WTC11 (cell line): ENCODE measurements at regions of chr17 and their contacts with region 1.

Region 1: DNA sequence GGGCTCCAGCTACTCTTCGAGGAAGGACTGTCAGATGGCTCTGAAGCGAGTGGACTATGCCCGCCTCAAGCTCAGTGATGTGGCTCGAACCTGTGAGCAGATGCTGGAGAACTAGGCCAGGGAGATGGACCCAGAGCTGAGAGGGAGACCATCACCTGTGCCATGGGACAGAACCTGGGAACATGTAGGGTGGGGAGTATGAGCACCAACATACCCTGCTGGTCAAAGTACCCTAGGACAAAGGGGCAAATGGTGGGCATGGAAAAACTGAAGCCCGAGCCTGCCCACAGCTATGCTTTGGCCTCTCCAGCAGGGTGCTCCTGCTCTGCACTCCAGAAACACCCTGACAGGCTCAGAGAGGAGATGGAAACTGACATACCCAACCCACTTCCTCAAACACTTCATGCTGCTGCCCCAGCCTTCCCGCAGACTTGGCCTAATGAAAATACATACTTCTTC is 1.9 kb downstream of the MED11 start:
- DNase-seq: no peak
- ATAC-seq: no peak
- H3K4me3 Mint-ChIP-seq: no peak overlapping the region
- H3K27ac Mint-ChIP-seq: no peak overlapping the region
- H3K4me1 Mint-ChIP-seq: peaks cover 4% of the 10 kb centered on the region
- H3K27me3 Mint-ChIP-seq: peaks cover 31% of the 10 kb centered on the region
- CTCF ChIP-seq: no peak

Region 2: GRCh38 chr17:4648741-4649140 is 84.4 kb before region 1 on chr17:
- CTCF ChIA-PET with region 1: no interaction called
- POLR2A ChIA-PET with region 1: no interaction called
- DNase-seq: no peak
- ATAC-seq: no peak
- H3K4me3 Mint-ChIP-seq: no peak overlapping the region
- H3K27ac Mint-ChIP-seq: no peak overlapping the region
- H3K4me1 Mint-ChIP-seq: peaks cover 8% of the 10 kb centered on the region
- H3K27me3 Mint-ChIP-seq: peaks cover 20% of the 10 kb centered on the region
- CTCF ChIP-seq: no peak

Region 3: GRCh38 chr17:4709794-4710692 is 23.1 kb before region 1 on chr17 and contains the start of gene ARRB2:
- CTCF ChIA-PET with region 1: interaction called, 17 read pairs
- POLR2A ChIA-PET with region 1: interaction called, 4 read pairs
- DNase-seq: peak; percentile 95
- ATAC-seq: peak; percentile 85
- H3K4me3 Mint-ChIP-seq: peak within 1 kb of the TSS; percentile 82
- H3K27ac Mint-ChIP-seq: peak within 1 kb of the TSS; percentile 98
- H3K4me1 Mint-ChIP-seq: peaks cover 30% of the 10 kb centered on the region
- H3K27me3 Mint-ChIP-seq: peaks cover 7% of the 10 kb centered on the region
- CTCF ChIP-seq: no peak
- total RNA-seq, gene ARRB2: 79.7 to 87.8 TPM (median 81.0 TPM) in 3 replicates

Region 4: DNA sequence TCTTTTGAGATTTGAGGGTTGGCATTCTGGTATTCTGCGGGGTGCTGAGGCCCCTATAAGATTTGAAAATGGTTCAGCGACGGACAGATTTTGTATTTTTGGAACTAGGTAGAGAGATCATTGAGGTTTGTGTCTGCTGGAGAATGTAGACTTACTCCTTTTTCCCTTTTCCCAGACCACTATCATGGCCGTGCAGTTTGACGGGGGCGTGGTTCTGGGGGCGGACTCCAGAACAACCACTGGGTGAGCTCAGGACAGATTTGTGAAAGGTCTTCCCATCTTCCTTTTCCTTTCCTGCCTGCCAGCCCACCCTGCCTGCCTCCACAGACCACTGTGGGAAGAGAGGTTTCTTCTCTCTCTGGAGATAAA is 63.4 kb after region 1 on chr17:
- CTCF ChIA-PET with region 1: interaction called, 10 read pairs
- POLR2A ChIA-PET with region 1: interaction called, 4 read pairs
- DNase-seq: peak; percentile 43
- ATAC-seq: peak; percentile 71
- H3K4me3 Mint-ChIP-seq: peak overlapping the region; percentile 99
- H3K27ac Mint-ChIP-seq: peak overlapping the region; percentile 99
- H3K4me1 Mint-ChIP-seq: no peaks in the 10 kb centered on the region
- H3K27me3 Mint-ChIP-seq: peaks cover 16% of the 10 kb centered on the region
- CTCF ChIP-seq: no peak

Region 5: DNA sequence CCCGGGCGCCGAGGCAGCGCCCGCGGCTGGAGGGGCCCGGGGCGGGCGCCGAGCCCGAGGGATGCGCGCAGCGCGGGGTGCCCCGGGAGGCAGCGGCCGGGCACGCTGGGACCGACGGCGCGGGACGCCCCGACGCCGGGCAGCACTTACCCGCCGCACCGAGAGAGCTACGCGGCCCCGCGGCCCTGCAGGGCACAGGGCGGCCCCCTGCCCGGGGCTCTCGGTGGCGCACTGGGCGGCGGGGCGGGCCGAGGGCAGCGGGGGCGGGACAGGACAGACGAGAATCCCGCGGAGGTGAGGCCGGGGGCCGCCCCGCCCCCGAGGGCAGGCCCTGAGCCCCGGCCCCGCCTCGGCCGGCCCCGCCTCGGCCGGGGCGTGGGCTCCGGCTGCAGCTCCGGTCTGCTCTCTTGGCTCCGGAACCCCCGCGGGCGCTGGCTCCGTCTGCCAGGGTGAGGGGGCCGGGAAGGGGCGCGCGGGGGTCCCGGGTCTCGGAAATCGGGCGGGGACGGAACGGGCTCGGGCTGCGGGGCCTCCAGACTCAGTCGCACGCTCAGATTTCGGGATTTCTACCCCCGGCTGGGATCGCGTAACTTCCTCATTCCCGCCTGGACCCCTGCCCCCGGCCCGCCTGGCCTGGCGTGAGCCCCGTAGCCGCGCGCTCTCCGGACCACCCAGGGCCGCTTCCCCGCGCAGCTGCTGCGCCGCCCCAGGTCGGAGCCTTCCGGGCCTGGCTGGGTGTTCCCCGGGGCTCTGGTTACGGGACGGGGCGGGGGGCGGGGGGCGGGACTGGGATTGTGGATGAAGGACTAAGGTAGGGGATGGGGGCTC is 73.9 kb after region 1 on chr17 and contains the start of gene PLD2:
- CTCF ChIA-PET with region 1: interaction called, 13 read pairs
- POLR2A ChIA-PET with region 1: no interaction called
- DNase-seq: peak; percentile 85
- ATAC-seq: peak; percentile 95
- H3K4me3 Mint-ChIP-seq: peak within 1 kb of the TSS; percentile 89
- H3K27ac Mint-ChIP-seq: peak within 1 kb of the TSS; percentile 36; the same call in 1 of the 2 replicates
- H3K4me1 Mint-ChIP-seq: peaks cover 10% of the 10 kb centered on the region
- H3K27me3 Mint-ChIP-seq: peaks cover 4% of the 10 kb centered on the region; the same call in 1 of the 2 replicates
- CTCF ChIP-seq: no peak
- total RNA-seq, gene PLD2: 51.3 to 64.9 TPM (median 52.1 TPM) in 3 replicates

Region 6: DNA sequence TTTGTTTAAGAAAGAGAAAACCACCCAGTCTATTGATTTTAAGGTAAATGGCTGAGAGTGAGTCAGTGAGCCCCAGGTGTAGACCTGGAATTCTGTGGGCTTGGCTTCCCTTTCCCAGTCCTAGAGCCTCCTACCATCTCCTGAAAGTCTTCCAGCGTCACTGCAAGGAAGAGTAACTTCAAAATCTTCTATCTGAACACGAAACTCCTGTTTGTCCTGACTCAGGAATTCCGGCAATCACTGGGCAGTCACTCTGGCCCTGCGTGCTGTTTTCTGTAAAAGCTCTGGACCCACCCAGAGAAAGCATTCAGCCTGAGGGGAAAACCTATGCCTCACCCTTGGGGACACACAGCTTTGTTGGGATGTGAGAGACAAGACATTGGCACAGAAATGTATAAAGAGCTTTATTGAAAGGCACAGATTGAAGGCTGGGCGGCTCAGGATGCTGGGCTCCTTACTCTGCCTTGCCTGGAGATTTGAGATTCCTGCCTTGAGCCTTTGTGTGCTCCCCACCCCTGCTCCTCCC is 116.0 kb after region 1 on chr17:
- CTCF ChIA-PET with region 1: no interaction called
- POLR2A ChIA-PET with region 1: no interaction called
- DNase-seq: no peak
- ATAC-seq: peak; percentile 69
- H3K4me3 Mint-ChIP-seq: 0 out of 2 replicates have a peak overlapping the region, but pooled peaks have one; percentile 10
- H3K27ac Mint-ChIP-seq: peak overlapping the region; percentile 87
- H3K4me1 Mint-ChIP-seq: peaks cover 62% of the 10 kb centered on the region
- H3K27me3 Mint-ChIP-seq: no peaks in the 10 kb centered on the region
- CTCF ChIP-seq: no peak